Cardiac septum (tissue), 1 donor: ENCODE measurements at regions of chr17 and their contacts with region 1.

Region 1: GRCh38 chr17:28763804-28764266 is 20.0 kb downstream of the TRAF4 start:
- DNase-seq: no peak

Region 2: DNA sequence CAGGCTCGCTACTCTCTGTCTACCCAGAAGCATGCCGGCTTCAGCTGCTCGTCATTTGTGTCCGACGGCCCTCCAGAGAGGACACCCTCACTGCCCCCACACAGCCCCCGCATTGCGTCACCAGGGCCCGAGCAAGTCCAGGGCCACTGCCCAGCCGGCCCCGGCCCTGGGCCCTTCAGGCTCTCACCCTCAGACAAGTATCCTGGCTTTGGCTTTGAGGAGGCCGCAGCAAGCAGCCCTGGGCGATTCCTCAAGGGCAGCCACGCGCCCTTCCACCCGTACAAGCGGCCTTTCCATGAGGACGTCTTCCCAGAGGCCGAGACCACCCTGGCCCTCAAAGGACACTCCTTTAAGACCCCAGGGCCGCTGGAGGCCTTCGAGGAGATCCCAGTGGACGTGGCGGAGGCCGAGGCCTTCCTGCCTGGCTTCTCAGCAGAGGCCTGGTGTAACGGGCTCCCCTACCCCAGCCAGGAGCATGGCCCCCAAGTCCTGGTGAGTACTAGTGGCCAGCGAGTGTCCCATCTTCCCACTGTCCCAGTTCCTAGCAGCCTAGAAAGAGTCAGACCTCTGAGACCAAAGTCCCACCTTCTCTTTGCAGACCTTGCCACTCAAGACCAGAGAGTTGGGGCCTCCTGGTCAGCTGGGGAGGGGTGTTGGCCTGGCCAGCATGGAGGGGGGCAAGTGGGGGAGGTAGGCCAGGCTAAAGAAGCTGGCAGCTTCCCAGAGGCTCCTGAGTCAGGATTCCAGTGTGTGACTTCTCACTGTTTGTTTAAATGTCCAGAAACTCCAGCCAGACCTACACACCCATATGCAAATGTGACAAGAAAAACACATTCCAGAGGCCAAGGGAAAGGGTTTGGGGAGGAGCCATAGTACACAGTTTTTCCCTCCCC is 239.1 kb before region 1 on chr17:
- intact Hi-C with region 1: no loop called
- DNase-seq: no peak

Region 3: GRCh38 chr17:28717578-28718333 is 46.1 kb before region 1 on chr17 and contains the start of gene RAB34:
- intact Hi-C with region 1: no loop called
- DNase-seq: no peak
- total RNA-seq, gene RAB34: 15.3 TPM

Region 4: DNA sequence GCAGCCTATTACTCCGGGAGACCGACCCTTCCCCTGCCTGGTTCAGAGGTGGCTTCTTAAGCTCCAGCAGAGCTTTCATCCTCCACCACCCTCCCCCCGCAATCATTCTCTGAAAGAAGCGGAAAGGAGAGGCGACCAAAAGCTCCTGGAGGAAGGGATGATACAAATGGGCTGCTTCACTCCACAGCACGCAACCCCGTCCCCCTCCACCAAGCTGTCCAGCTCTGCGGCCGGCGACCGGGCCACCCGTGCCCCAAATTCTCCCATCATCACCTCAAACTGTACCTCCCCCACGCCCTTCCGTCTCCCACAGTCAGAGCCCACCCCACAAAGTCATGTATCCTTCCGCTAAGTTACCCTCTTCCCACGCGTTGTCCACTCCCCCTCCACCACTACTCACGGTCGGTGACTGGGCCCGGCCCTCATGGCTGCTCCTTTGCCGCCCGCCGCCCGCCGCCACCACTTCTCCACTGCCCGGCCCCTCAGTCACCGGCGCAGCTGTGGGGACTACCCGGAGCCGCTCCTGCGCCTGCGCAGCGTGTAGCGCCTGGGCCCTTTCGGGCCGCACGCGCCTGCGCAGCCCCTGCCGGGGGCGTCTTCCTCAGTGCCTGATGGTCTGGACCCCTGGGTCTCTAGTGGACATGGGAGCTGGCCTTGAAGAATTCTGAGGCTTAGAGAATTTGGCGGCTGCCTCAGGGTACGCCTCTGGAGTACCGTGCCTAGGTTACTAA is 78.6 kb after region 1 on chr17 and contains the start of gene FAM222B:
- intact Hi-C with region 1: loop called (anchors 5 kb)
- DNase-seq: peak; percentile 90
- total RNA-seq, gene FAM222B: 18.6 TPM

Region 5: DNA sequence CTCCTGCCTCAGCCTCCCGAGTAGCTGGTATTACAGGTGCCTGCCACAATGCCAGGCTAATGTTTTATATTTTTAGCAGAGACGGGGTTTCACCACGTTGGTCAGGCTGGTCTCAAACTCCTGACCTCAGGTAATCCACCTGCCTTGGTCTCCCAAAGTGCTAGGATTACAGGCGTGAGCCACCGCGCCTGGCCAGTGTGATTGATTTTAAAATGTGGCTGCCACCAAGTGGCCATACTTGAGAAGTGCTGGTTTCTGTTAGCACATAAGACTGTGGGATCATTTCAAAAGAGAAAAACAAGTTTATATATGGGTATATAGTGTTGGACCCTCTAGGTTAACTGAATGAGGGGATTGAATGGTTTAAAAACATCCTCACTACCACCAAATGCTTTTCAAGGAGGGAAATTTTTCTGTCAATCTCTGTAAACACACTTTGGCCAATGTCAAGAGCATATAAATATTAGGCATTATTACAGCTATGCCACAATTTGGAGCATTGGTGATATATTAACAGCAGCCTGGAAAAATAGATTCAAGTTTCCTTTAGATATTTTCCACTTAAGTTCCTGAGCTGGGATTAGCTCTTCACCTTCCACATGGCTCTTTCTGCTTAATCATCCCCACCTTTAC is 152.6 kb after region 1 on chr17:
- intact Hi-C with region 1: loop called (anchors 5 kb)
- DNase-seq: peak; percentile 81